ENCODE measurements at regions of chr14 and their contacts with region 1.

Region 1: GRCh38 chr14:69460093-69460701 is 24.3 kb upstream of the PLEKHD1 start:
- DNase-seq: peak; percentile 39
- ATAC-seq: peak; percentile 63
- H3K4me3 Mint-ChIP-seq: no peak overlapping the region
- H3K27ac Mint-ChIP-seq: no peak overlapping the region
- H3K4me1 Mint-ChIP-seq: no peaks in the 10 kb centered on the region
- H3K27me3 Mint-ChIP-seq: no peaks in the 10 kb centered on the region
- CTCF ChIP-seq: peak; percentile 35

Region 2: GRCh38 chr14:69242311-69243224 is 217.6 kb before region 1 on chr14:
- CTCF ChIA-PET with region 1: interaction called, 15 read pairs
- POLR2A ChIA-PET with region 1: no interaction called
- DNase-seq: peak; percentile 67
- ATAC-seq: peak; percentile 80
- H3K4me3 Mint-ChIP-seq: no peak overlapping the region
- H3K27ac Mint-ChIP-seq: no peak overlapping the region
- H3K4me1 Mint-ChIP-seq: peaks cover 6% of the 10 kb centered on the region
- H3K27me3 Mint-ChIP-seq: no peaks in the 10 kb centered on the region
- CTCF ChIP-seq: peak; percentile 73

Region 3: GRCh38 chr14:69398053-69398817 is 62.0 kb before region 1 on chr14 and contains the starts of genes ERH and SLC39A9:
- CTCF ChIA-PET with region 1: interaction called, 14 read pairs
- POLR2A ChIA-PET with region 1: interaction called, 4 read pairs
- DNase-seq: peak; percentile 93
- ATAC-seq: peak; percentile 91
- H3K4me3 Mint-ChIP-seq: peak within 1 kb of the TSS; percentile 94
- H3K27ac Mint-ChIP-seq: peak within 1 kb of the TSS; percentile 100
- H3K4me1 Mint-ChIP-seq: peaks cover 33% of the 10 kb centered on the region
- H3K27me3 Mint-ChIP-seq: no peaks in the 10 kb centered on the region
- CTCF ChIP-seq: no peak
- total RNA-seq, gene ERH: 320 to 363 TPM (median 356 TPM) in 3 replicates
- total RNA-seq, gene SLC39A9: 39.2 to 44.1 TPM (median 42.6 TPM) in 3 replicates

Region 4: GRCh38 chr14:69475194-69475818 is 15.1 kb after region 1 on chr14:
- CTCF ChIA-PET with region 1: interaction called, 18 read pairs
- POLR2A ChIA-PET with region 1: no interaction called
- DNase-seq: no peak
- ATAC-seq: peak; percentile 78
- H3K4me3 Mint-ChIP-seq: no peak overlapping the region
- H3K27ac Mint-ChIP-seq: no peak overlapping the region
- H3K4me1 Mint-ChIP-seq: no peaks in the 10 kb centered on the region
- H3K27me3 Mint-ChIP-seq: peaks cover 3% of the 10 kb centered on the region
- CTCF ChIP-seq: no peak; the same call in 1 of the 2 replicates

Region 5: GRCh38 chr14:70121521-70121920 is 661.3 kb after region 1 on chr14:
- CTCF ChIA-PET with region 1: no interaction called
- POLR2A ChIA-PET with region 1: no interaction called
- DNase-seq: peak; percentile 31
- ATAC-seq: peak; percentile 78
- H3K4me3 Mint-ChIP-seq: no peak overlapping the region
- H3K27ac Mint-ChIP-seq: no peak overlapping the region
- H3K4me1 Mint-ChIP-seq: peaks cover 22% of the 10 kb centered on the region
- H3K27me3 Mint-ChIP-seq: peaks cover 3% of the 10 kb centered on the region; the same call in 1 of the 2 replicates
- CTCF ChIP-seq: no peak

Measured in WTC11 (cell line).